Aorta (tissue), 5 donors: ENCODE measurements at regions of chr19 and their contacts with region 1.

Region 1: GRCh38 chr19:18469069-18469846 is 31.3 kb upstream of the ISYNA1 start:
- DNase-seq: peak; percentile 72 to 91
- ATAC-seq: peak; percentile 63
- H3K4me3 ChIP-seq: no peak overlapping the region
- H3K27ac ChIP-seq: no peak overlapping the region
- H3K4me1 ChIP-seq: no peaks in the 10 kb centered on the region
- H3K27me3 ChIP-seq: no peaks in the 10 kb centered on the region

Region 2: DNA sequence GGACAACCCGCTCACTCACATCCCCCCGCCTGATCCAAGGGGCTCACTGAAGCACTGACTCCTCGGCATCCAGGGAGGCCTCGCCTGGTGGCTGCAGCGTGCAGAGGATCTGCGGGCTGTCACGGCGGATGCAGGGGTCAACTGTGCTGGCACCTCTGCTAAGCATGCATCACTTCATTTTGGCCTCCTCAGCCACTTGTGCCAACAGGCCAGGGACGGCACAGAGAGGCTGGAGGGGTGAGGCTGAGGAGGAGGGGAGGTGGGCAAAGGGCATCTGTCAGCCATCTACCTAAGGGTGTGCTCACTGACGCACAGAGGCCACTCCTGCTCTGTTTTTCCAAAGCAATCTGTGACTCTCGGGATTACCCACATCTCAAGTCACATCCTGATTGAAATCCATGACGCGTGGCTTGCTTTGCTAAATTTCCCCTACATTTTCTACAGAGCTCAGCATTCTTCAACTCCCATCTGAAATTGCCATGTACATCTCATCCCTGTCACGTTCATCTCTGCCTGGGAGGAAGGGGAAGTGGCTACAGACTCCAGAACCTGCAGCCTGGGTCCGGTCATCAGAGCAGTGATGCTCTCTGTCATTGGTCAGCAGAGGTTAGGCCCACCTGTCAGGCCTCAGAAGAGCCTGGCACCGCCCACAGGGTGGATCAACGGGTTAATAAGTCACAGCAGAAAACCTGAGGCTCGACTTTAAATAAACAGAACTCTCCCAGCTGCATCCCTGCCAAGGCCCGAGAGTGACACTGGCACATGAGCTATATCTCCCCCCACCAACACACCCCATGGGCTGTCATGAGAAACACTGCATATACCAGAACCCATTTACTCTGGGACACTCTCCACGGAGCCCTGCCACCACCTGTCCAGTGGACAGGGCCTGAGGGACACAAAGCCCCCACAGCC is 35.0 kb after region 1 on chr19:
- intact Hi-C with region 1: loop called in 1 of 2 experiments (anchors 5 kb)
- DNase-seq: no peak
- ATAC-seq: no peak
- H3K4me3 ChIP-seq: no peak overlapping the region
- H3K27ac ChIP-seq: no peak overlapping the region
- H3K4me1 ChIP-seq: peaks cover 9 to 10% of the 10 kb centered on the region in 2 donors
- H3K27me3 ChIP-seq: no peaks in the 10 kb centered on the region

Region 3: DNA sequence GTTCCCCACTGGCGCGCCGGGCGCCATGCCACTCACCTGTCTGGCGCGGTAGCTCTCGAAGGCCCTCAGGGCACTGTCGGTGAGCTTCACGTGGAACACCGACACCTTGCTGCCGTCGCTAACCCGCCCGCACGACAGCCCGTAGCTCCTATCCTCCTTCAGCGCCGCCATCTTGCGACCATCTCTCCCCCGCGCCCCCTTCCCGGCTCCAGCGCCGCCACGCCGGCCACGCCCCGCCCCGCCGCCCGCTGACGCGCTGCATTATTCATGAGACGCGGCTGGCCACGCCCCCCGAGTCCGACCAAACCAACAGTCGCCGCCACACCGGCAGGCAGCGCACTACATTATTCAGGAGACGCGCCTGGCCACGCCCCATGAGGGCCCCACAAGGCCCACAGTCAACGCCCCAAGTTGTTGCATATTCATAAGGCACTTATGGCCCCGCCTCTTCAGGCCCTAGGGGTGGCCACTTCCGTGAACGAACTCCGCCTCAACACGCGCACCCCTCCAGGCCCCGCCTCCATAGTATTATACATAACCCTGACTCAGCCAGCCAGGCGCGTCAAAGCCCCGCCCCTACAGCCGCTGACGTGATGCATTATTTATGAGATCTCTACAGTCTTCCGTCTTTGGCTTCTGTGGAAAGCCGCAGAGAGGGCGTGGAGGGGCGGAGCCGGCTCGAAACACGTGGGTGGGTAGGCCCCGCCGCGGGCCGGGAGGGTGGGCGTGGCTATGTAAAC is 52.8 kb after region 1 on chr19 and contains the start of gene ELL:
- intact Hi-C with region 1: loop called (anchors 5 kb)
- DNase-seq: peak; percentile 100
- ATAC-seq: peak; percentile 96
- H3K4me3 ChIP-seq: peak within 1 kb of the TSS; percentile 78 to 95
- H3K27ac ChIP-seq: peak within 1 kb of the TSS; percentile 33 to 94
- H3K4me1 ChIP-seq: no peaks in the 10 kb centered on the region
- H3K27me3 ChIP-seq: no peaks in the 10 kb centered on the region
- total RNA-seq, gene ELL: 30.0 to 37.9 TPM

Region 4: DNA sequence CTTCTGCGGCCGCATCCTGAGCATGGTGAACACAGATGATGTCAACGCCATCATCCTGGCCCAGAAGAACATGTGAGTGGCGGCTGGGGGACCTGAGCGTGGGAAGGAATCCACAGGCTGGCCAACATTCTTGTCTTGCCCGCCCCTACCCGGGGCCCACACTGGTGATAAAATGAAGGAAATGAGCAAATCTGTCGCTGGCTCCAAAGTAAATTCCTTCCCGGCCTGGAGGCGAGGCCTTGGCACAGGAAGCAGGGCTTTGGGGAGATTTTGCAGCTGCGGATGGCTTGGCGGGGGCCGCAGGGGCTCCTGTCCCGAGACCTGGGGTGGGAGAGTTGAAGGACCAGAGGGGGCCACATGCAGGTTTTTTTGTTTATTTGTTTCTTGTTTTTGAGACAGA is 92.8 kb after region 1 on chr19:
- intact Hi-C with region 1: no loop called
- DNase-seq: peak; percentile 87 to 91
- ATAC-seq: peak; percentile 63
- H3K4me3 ChIP-seq: no peak overlapping the region
- H3K27ac ChIP-seq: peak overlapping the region; percentile 92 to 94
- H3K4me1 ChIP-seq: peaks cover 0 to 4% of the 10 kb centered on the region in 2 donors
- H3K27me3 ChIP-seq: no peaks in the 10 kb centered on the region

Region 5: GRCh38 chr19:18700501-18701249 is 231.4 kb after region 1 on chr19:
- intact Hi-C with region 1: no loop called
- DNase-seq: peak; percentile 86 to 91
- ATAC-seq: peak; percentile 85
- H3K4me3 ChIP-seq: peak overlapping the region in 1 of 2 donors; percentile 24
- H3K27ac ChIP-seq: no peak overlapping the region
- H3K4me1 ChIP-seq: no peaks in the 10 kb centered on the region
- H3K27me3 ChIP-seq: no peaks in the 10 kb centered on the region